ENCODE measurements at regions of chr7 and their contacts with region 1.

Region 1: DNA sequence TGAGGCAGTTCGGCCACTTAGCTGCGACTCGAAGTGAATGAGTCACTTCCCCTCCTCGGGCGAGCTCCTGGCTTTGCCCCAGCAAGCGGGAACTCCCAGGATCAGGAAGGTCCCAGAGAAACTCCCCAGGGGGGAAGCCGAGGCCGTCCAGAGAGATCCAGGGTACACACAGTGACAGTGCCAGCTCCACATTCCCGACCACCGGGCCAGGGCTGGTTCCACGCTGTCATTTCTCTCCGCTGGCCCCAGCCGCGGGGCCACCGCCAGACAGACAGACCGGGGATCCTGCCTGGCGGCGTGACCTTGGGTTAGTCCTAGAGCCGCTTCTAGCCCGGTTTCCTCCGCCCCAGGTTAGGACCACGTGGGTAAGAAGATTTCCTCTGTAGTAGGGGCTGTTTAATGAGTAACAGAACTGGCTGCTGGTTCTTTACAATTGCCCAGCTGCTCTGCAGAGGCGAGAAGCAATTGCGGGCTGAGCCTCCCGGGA is 463 bp upstream of the UPP1 start:
- DNase-seq: peak; percentile 95
- ATAC-seq: peak; percentile 74
- H3K4me3 Mint-ChIP-seq: peak overlapping the region; percentile 81
- H3K27ac Mint-ChIP-seq: peak overlapping the region; percentile 89
- H3K4me1 Mint-ChIP-seq: peaks cover 64% of the 10 kb centered on the region
- H3K27me3 Mint-ChIP-seq: no peaks in the 10 kb centered on the region
- CTCF ChIP-seq: no peak

Region 2: DNA sequence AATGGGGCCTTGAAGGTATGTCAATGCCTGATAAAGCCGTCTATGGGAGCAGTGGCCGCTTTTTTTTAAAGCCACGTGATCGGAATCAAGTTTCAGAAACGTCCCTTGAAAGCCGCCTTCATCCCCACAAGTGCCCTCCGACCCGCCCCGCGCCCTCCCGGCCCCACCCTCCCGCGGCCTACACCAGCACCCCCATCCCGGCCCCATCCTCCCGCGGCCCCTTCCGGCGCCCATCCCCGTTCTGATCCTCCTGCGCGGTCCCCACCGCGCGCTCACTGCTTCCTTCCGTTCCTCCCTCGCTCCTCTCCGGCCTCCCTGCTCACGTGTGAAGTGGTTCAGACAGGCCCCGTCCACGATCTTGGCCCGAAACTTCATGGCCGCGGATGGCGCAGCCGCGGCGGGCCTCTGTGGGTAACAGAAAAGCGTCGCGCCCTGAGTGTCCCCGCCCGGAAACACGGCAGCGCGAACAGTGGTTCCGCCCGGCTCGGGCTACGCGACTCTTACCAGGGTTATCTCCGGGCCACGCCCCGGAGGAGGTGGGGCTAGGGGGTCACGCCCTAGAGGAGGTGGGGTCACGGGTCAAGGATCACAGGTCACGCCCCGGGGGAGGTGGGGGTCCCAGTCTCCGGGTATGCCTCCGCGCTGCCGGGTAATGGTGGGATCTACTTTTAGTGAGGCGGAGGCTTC is 109.3 kb before region 1 on chr7 and contains the start of gene HUS1:
- CTCF ChIA-PET with region 1: interaction called, 3 read pairs
- POLR2A ChIA-PET with region 1: interaction called, 4 read pairs
- intact Hi-C with region 1: loop called (anchors 1 kb)
- DNase-seq: peak; percentile 94
- ATAC-seq: peak; percentile 98
- H3K4me3 Mint-ChIP-seq: peak within 1 kb of the TSS; percentile 85
- H3K27ac Mint-ChIP-seq: peak within 1 kb of the TSS; percentile 97
- H3K4me1 Mint-ChIP-seq: peaks cover 26% of the 10 kb centered on the region
- H3K27me3 Mint-ChIP-seq: no peaks in the 10 kb centered on the region
- CTCF ChIP-seq: no peak
- total RNA-seq, gene HUS1: 37.1 to 43.5 TPM

Region 3: DNA sequence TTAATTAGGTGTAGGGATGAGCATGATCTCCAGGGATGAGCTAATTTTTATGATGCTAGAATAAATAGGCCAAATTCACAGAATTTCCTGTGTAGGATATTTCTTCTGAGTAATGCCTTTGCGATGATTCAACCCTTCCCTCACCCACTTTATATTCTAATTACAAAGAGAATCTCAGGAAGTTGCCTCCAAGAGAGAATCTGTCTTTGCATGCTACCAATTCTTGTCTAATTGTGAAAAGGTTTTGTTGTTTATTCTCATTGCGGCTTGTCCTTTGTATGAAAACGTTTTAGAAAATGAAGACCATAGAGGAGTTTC is 47.0 kb before region 1 on chr7:
- CTCF ChIA-PET with region 1: interaction called, 3 read pairs
- POLR2A ChIA-PET with region 1: interaction called, 5 read pairs
- intact Hi-C with region 1: loop called (anchors 5 kb)
- DNase-seq: no peak
- ATAC-seq: peak; percentile 70
- H3K4me3 Mint-ChIP-seq: peak overlapping the region; percentile 20
- H3K27ac Mint-ChIP-seq: peak overlapping the region; percentile 90
- H3K4me1 Mint-ChIP-seq: peaks cover 43% of the 10 kb centered on the region
- H3K27me3 Mint-ChIP-seq: peaks cover 9% of the 10 kb centered on the region
- CTCF ChIP-seq: no peak

Region 4: DNA sequence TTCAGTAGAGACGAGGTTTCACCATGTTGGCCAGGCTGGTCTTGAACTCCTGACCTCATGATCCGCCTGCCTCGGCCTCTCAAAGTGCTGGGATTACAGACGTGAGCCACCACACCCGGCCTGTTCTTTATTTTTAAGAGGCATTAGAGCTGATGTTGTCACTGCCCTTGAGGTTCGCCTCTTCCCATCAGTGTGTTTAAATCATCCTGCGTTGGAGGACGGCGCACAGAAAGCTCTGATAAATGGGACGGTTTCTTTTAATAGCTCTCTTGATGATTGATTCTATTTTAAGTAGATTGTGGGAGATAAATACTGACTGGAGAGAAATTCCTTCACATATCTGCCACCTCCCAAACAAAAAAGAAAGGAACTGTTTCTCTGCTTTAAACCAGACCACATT is 29.4 kb after region 1 on chr7:
- CTCF ChIA-PET with region 1: no interaction called
- POLR2A ChIA-PET with region 1: no interaction called
- intact Hi-C with region 1: no loop called
- DNase-seq: no peak
- ATAC-seq: no peak
- H3K4me3 Mint-ChIP-seq: no peak overlapping the region
- H3K27ac Mint-ChIP-seq: no peak overlapping the region
- H3K4me1 Mint-ChIP-seq: no peaks in the 10 kb centered on the region
- H3K27me3 Mint-ChIP-seq: peaks cover 2% of the 10 kb centered on the region
- CTCF ChIP-seq: no peak